ENCODE measurements at regions of chr7 and their contacts with region 1.

Region 1: GRCh38 chr7:135645296-135645904 is 16.9 kb upstream of the STMP1 start:
- DNase-seq: no peak
- H3K4me3 ChIP-seq: no peak overlapping the region
- H3K27ac ChIP-seq: no peak overlapping the region
- H3K27me3 ChIP-seq: no peaks in the 10 kb centered on the region
- CTCF ChIP-seq: peak; percentile 75

Region 2: GRCh38 chr7:135274495-135275268 is 370.7 kb before region 1 on chr7:
- CTCF ChIA-PET with region 1: interaction called, 146 read pairs
- POLR2A ChIA-PET with region 1: no interaction called
- DNase-seq: peak; percentile 48
- H3K4me3 ChIP-seq: no peak overlapping the region
- H3K27ac ChIP-seq: no peak overlapping the region
- H3K27me3 ChIP-seq: peaks cover 10% of the 10 kb centered on the region
- CTCF ChIP-seq: peak; percentile 81

Region 3: DNA sequence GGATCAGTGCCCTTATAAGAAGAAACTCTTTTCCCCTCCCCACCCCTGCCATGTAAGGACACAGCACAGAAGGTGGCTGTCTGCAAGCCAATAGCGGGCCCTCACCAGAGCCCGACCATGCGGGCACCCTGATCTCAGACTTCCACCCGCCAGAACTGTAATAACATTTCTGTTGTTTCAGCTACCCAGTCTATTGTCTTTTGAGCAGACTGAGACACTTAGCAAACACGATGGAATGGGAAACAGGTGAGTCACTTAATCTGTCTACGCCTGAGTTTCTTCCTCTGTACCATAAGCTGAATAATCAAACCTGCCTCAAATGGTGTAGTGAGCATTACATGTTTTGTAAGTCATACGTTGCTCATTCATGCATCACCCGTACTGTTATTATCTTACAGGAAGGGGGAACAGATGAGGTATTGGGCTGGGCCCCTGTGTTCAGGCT is 353.6 kb before region 1 on chr7:
- CTCF ChIA-PET with region 1: interaction called, 13 read pairs
- POLR2A ChIA-PET with region 1: no interaction called
- DNase-seq: peak; percentile 18
- H3K4me3 ChIP-seq: no peak overlapping the region
- H3K27ac ChIP-seq: no peak overlapping the region
- H3K27me3 ChIP-seq: no peaks in the 10 kb centered on the region
- CTCF ChIP-seq: no peak

Region 4: GRCh38 chr7:135616136-135616535 is 29.3 kb before region 1 on chr7:
- CTCF ChIA-PET with region 1: interaction called, 136 read pairs
- POLR2A ChIA-PET with region 1: no interaction called
- DNase-seq: no peak
- H3K4me3 ChIP-seq: no peak overlapping the region
- H3K27ac ChIP-seq: no peak overlapping the region
- H3K27me3 ChIP-seq: no peaks in the 10 kb centered on the region
- CTCF ChIP-seq: no peak

Region 5: DNA sequence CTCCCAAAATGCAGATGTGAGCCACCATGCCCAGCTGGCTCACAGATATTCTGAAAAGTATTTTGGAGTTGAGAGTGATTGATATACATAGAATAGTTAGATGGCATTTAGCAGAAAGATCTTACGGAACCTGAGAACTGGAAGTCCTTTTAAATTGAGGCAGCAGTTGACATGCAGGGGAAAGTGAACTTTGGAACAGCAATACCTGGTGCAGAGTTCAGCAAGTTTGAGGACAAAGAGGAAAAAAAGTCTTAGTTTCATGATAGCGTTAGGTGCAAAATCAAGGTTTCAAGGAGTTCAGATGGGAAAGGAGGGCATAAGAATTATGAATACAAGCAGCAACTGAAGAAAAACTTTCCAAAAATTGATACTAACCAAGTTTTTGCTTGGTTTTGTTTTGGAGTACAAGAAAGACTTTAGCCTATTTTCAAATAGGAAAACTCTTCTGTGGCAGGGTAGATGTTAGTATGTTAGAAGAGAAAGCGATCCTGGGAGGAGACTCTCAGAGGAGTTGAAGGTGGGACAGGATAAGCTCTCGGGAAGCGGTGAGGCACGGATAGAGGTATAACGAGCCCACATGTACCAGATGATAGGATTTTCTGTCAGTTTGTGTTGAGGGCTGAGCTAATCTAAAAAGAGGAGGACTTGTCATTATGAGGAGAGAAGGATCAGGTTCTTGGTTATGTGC is 11.1 kb before region 1 on chr7:
- CTCF ChIA-PET with region 1: interaction called, 101 read pairs
- POLR2A ChIA-PET with region 1: no interaction called
- DNase-seq: no peak
- H3K4me3 ChIP-seq: no peak overlapping the region
- H3K27ac ChIP-seq: no peak overlapping the region
- H3K27me3 ChIP-seq: no peaks in the 10 kb centered on the region
- CTCF ChIP-seq: no peak

Region 6: GRCh38 chr7:135672560-135673359 is 27.4 kb after region 1 on chr7:
- CTCF ChIA-PET with region 1: interaction called, 35 read pairs
- POLR2A ChIA-PET with region 1: no interaction called
- DNase-seq: peak; percentile 58
- H3K4me3 ChIP-seq: no peak overlapping the region
- H3K27ac ChIP-seq: no peak overlapping the region
- H3K27me3 ChIP-seq: no peaks in the 10 kb centered on the region
- CTCF ChIP-seq: peak; percentile 89